OCI-LY7 (cell line): ENCODE measurements at regions of chr12 and their contacts with region 1.

Region 1: GRCh38 chr12:49967042-49967776 is 5.5 kb downstream of the AQP5 start:
- DNase-seq: peak; percentile 86
- H3K4me3 ChIP-seq: peak overlapping the region; percentile 61
- H3K27ac ChIP-seq: no peak overlapping the region
- H3K4me1 ChIP-seq: peaks cover 9% of the 10 kb centered on the region
- CTCF ChIP-seq: peak; percentile 90

Region 2: DNA sequence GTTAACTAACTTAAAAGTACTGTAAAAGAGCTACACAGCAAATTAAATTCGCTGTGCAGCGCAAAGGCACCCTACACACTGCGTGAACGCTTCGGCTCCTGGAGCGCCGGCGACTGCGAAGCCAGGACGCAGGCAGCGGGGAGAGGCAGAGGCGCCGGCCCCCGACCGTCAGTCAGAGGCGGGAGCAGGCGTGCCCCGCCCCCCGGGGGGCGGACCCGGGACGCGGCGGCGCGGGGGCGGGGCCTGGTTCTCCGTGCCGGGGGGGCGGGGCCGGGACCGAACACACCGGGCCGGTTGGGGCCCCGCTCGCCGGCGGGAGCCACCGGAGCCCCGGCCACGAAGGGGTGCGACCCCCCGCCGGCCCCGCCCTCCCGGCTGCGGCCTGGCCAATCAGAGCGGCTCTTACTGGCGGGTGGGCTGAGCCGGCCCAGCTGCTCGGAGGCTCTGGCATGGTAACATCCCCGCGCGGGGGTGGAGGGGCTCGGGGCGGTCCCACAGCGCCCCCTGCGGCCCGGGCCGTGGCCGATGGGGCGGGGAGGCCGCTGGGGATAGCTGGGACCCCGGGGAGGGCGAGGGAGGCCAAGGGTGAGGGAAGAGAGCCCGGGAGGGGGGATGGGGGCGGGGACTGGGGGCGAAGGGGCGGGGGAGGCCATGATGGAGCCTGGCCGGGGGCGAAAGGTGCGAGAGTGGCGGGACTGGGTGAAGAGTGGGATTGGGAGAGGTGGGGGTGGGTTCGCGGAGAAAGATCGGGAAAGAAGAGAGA is 343.9 kb before region 1 on chr12 and contains the start of gene PRPF40B:
- CTCF ChIA-PET with region 1: no interaction called
- POLR2A ChIA-PET with region 1: no interaction called
- intact Hi-C with region 1: no loop called
- DNase-seq: peak; percentile 92
- H3K4me3 ChIP-seq: peak within 1 kb of the TSS; percentile 68
- H3K27ac ChIP-seq: peak within 1 kb of the TSS; percentile 82
- H3K4me1 ChIP-seq: peaks cover 30% of the 10 kb centered on the region
- CTCF ChIP-seq: peak; percentile 66
- total RNA-seq, gene PRPF40B: 11.3 and 17.0 TPM in 2 replicates

Region 3: GRCh38 chr12:50038336-50038735 is 71.1 kb after region 1 on chr12:
- CTCF ChIA-PET with region 1: interaction called, 4 read pairs
- POLR2A ChIA-PET with region 1: no interaction called
- intact Hi-C with region 1: loop called (anchors 5 kb)
- DNase-seq: no peak
- H3K4me3 ChIP-seq: no peak overlapping the region
- H3K27ac ChIP-seq: no peak overlapping the region
- H3K4me1 ChIP-seq: no peaks in the 10 kb centered on the region
- CTCF ChIP-seq: no peak

Region 4: DNA sequence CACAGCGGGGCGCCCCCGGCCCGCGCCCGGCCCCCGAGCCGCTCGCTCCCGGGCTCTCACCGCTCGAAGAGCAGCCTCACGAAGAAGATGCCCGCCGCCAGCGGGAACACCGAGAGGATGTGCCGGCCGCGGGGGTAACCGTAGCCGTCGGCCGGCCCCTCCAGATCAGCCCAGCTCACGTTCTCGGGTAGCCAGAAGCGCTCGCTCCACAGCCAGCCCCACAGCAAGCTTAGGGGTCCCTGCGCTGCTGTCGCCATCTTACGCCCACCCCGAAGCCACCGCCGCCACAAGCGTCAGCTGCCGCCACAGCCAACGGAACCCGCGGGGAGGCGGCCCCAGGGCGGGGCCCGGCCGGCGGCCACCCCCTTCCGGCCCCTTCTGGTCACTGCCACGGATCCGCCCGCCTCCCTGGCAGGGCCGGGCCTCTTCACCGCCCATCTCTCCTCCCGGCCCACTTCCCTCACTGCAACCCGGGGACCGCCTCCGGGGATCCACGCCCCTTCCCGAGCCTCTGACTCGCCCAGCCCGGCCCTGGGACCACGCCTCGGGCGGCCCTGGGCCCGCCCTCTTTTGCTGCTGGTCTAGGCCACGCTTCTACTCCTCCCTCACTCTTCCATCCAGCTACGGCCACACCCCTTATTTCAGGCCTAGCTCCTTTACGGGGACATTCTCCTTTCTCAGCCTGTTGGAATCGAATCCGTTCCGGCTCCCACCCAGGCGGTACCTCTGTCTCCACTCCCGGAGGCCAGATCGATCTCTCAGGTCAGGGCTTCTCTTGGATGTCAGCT is 200.0 kb after region 1 on chr12 and contains the start of gene CERS5:
- CTCF ChIA-PET with region 1: no interaction called
- POLR2A ChIA-PET with region 1: no interaction called
- intact Hi-C with region 1: loop called (anchors 5 kb)
- DNase-seq: peak; percentile 96
- H3K4me3 ChIP-seq: peak within 1 kb of the TSS; percentile 93
- H3K27ac ChIP-seq: peak within 1 kb of the TSS; percentile 71
- H3K4me1 ChIP-seq: peaks cover 11% of the 10 kb centered on the region
- CTCF ChIP-seq: no peak
- total RNA-seq, gene CERS5: 27.6 and 28.6 TPM in 2 replicates